GM12878 (cell line): ENCODE measurements at regions of chr6 and their contacts with region 1.

Region 1: GRCh38 chr6:63598049-63599036 is 26.1 kb downstream of the LOC128125822 start:
- DNase-seq: peak; percentile 57
- ATAC-seq: peak; percentile 100
- H3K4me3 ChIP-seq: peak overlapping the region; percentile 74
- H3K27ac ChIP-seq: peak overlapping the region; percentile 56
- H3K4me1 ChIP-seq: peaks cover 6% of the 10 kb centered on the region
- H3K27me3 ChIP-seq: no peaks in the 10 kb centered on the region
- CTCF ChIP-seq: peak; percentile 88 to 94 (median 93); a peak in 5 of 6 replicates
- EP300 ChIP-seq: no peak
- POLR2A ChIP-seq: 0 out of 2 replicates have a peak, but pooled peaks have one; percentile 41
- RAD21 ChIP-seq: peak; percentile 87

Region 2: GRCh38 chr6:63347599-63347998 is 250.7 kb before region 1 on chr6:
- CTCF ChIA-PET with region 1: interaction called, 118 read pairs
- POLR2A ChIA-PET with region 1: interaction called, 8 read pairs
- RAD21 ChIA-PET with region 1: interaction called, 69 read pairs
- SMC1A ChIA-PET with region 1: interaction called, 95 read pairs
- in situ Hi-C with region 1: loop called (anchors 5 kb)
- intact Hi-C with region 1: loop called (anchors 1 kb)
- DNase-seq: no peak
- ATAC-seq: peak; percentile 25
- H3K4me3 ChIP-seq: no peak overlapping the region
- H3K27ac ChIP-seq: no peak overlapping the region
- H3K4me1 ChIP-seq: peaks cover 11% of the 10 kb centered on the region
- H3K27me3 ChIP-seq: no peaks in the 10 kb centered on the region
- CTCF ChIP-seq: no peak
- EP300 ChIP-seq: no peak
- POLR2A ChIP-seq: no peak
- RAD21 ChIP-seq: no peak

Region 3: DNA sequence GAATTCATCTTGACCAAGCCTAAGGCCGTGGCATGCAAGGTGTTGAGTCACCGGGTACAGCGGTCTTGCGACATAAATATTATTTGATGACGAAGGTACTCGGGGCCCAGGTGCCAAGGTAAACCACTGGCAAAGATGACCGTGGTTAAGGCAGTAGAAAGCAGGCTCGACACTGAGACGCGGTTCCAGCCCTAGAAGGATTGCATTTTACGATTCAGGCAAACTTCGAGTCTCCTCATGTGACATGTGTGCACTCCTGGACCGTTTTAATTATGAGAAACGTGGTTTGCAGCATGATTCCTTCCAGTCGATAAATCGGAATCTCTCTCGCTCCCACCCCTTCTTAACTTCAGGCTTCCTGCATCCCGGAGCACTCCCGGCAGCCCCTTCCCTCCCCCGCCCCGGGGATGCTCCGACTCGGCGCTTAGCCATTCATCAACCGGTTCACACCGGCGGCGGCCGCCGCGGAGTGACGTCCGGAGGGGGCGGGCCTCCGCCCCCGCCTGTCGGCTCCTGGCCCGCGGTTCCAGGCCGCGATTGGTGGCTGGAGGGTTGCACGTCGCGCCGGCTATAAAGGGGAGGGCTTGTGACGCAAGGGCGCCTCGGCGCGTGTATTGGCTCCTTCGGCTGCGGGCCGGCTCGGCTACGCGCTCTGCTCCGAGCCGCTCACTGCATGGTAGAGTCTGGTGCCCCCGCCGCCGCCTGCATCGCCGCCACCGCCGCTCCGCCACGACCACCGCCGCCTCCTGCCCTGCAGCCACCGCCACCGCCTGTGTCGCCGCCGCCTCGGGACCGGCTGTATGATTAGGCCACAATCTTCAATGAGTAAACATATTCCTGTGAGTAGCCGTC is 26.2 kb before region 1 on chr6 and contains the starts of genes LOC128125822 and PTP4A1:
- CTCF ChIA-PET with region 1: interaction called, 20 read pairs
- POLR2A ChIA-PET with region 1: interaction called, 7 read pairs
- RAD21 ChIA-PET with region 1: interaction called, 16 read pairs
- SMC1A ChIA-PET with region 1: interaction called, 6 read pairs
- in situ Hi-C with region 1: no loop called
- intact Hi-C with region 1: no loop called
- DNase-seq: peak; percentile 81
- ATAC-seq: peak; percentile 91
- H3K4me3 ChIP-seq: peak within 1 kb of the TSS; percentile 80
- H3K27ac ChIP-seq: peak within 1 kb of the TSS; percentile 98
- H3K4me1 ChIP-seq: no peaks in the 10 kb centered on the region; the same call in 1 of the 2 replicates
- H3K27me3 ChIP-seq: no peaks in the 10 kb centered on the region
- CTCF ChIP-seq: no peak
- EP300 ChIP-seq: peak in 1 of 2 experiments; percentile 68; a peak in 2 of 4 replicates
- POLR2A ChIP-seq: peak; percentile 91
- RAD21 ChIP-seq: no peak
- polyA plus RNA-seq, gene PTP4A1: not detected

Region 4: GRCh38 chr6:63609231-63609630 is 10.9 kb after region 1 on chr6:
- CTCF ChIA-PET with region 1: interaction called, 20 read pairs
- POLR2A ChIA-PET with region 1: interaction called, 4 read pairs
- RAD21 ChIA-PET with region 1: interaction called, 6 read pairs
- SMC1A ChIA-PET with region 1: interaction called, 3 read pairs
- in situ Hi-C with region 1: no loop called
- intact Hi-C with region 1: no loop called
- DNase-seq: no peak
- ATAC-seq: no peak
- H3K4me3 ChIP-seq: no peak overlapping the region
- H3K27ac ChIP-seq: no peak overlapping the region
- H3K4me1 ChIP-seq: no peaks in the 10 kb centered on the region
- H3K27me3 ChIP-seq: no peaks in the 10 kb centered on the region
- CTCF ChIP-seq: no peak
- EP300 ChIP-seq: no peak
- POLR2A ChIP-seq: no peak
- RAD21 ChIP-seq: no peak

Region 5: GRCh38 chr6:63685446-63686379 is 87.4 kb after region 1 on chr6:
- CTCF ChIA-PET with region 1: interaction called, 31 read pairs
- POLR2A ChIA-PET with region 1: interaction called, 3 read pairs
- RAD21 ChIA-PET with region 1: interaction called, 13 read pairs
- SMC1A ChIA-PET with region 1: interaction called, 15 read pairs
- in situ Hi-C with region 1: no loop called
- intact Hi-C with region 1: no loop called
- DNase-seq: peak; percentile 35
- ATAC-seq: peak; percentile 88
- H3K4me3 ChIP-seq: peak overlapping the region; percentile 14; the same call in 1 of the 2 replicates
- H3K27ac ChIP-seq: peak overlapping the region; percentile 78
- H3K4me1 ChIP-seq: peaks cover 17% of the 10 kb centered on the region
- H3K27me3 ChIP-seq: no peaks in the 10 kb centered on the region
- CTCF ChIP-seq: no peak
- EP300 ChIP-seq: no peak
- POLR2A ChIP-seq: no peak
- RAD21 ChIP-seq: no peak

Region 6: GRCh38 chr6:63750400-63750799 is 152.1 kb after region 1 on chr6:
- CTCF ChIA-PET with region 1: interaction called, 10 read pairs
- POLR2A ChIA-PET with region 1: no interaction called
- RAD21 ChIA-PET with region 1: no interaction called
- SMC1A ChIA-PET with region 1: interaction called, 5 read pairs
- in situ Hi-C with region 1: no loop called
- intact Hi-C with region 1: no loop called
- DNase-seq: no peak
- ATAC-seq: no peak
- H3K4me3 ChIP-seq: no peak overlapping the region
- H3K27ac ChIP-seq: no peak overlapping the region
- H3K4me1 ChIP-seq: no peaks in the 10 kb centered on the region
- H3K27me3 ChIP-seq: no peaks in the 10 kb centered on the region
- CTCF ChIP-seq: no peak
- EP300 ChIP-seq: no peak
- POLR2A ChIP-seq: no peak
- RAD21 ChIP-seq: no peak

Region 7: GRCh38 chr6:63774961-63775360 is 176.6 kb after region 1 on chr6:
- CTCF ChIA-PET with region 1: interaction called, 10 read pairs
- POLR2A ChIA-PET with region 1: no interaction called
- RAD21 ChIA-PET with region 1: no interaction called
- SMC1A ChIA-PET with region 1: interaction called, 8 read pairs
- in situ Hi-C with region 1: no loop called
- intact Hi-C with region 1: no loop called
- DNase-seq: no peak
- ATAC-seq: no peak
- H3K4me3 ChIP-seq: no peak overlapping the region
- H3K27ac ChIP-seq: no peak overlapping the region
- H3K4me1 ChIP-seq: no peaks in the 10 kb centered on the region
- H3K27me3 ChIP-seq: no peaks in the 10 kb centered on the region
- CTCF ChIP-seq: no peak
- EP300 ChIP-seq: no peak
- POLR2A ChIP-seq: no peak
- RAD21 ChIP-seq: no peak